Calu3 (cell line): ENCODE measurements at regions of chr4 and their contacts with region 1.

Region 1: GRCh38 chr4:3880615-3881120 is 114.5 kb downstream of the ADRA2C start:
- DNase-seq: peak; percentile 79
- H3K4me3 Mint-ChIP-seq: no peak overlapping the region
- H3K27ac Mint-ChIP-seq: no peak overlapping the region
- H3K4me1 Mint-ChIP-seq: no peaks in the 10 kb centered on the region
- H3K27me3 Mint-ChIP-seq: peaks cover 87% of the 10 kb centered on the region
- CTCF ChIP-seq: peak; percentile 65

Region 2: DNA sequence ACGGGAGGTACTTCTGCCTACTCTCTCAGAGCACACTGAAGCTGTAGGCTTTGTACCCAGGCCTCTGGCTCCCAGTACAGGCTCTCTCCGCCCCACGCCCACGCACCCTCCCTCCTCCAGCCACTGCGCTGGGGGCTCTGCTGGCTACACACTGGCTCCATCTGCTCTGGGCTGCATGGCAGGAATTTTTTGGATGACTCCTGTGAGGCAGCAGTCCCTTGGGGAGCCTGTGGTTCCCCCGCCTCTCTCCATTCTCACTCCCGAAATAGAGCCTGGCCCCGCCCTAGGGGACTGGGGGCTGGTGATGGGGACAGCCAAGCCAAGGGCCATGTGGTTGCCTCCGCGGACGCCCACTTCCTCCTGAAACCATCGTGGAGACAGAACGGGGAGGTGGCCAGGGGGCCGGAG is 172.6 kb before region 1 on chr4:
- CTCF ChIA-PET with region 1: no interaction called
- intact Hi-C with region 1: no loop called
- DNase-seq: no peak
- H3K4me3 Mint-ChIP-seq: no peak overlapping the region
- H3K27ac Mint-ChIP-seq: no peak overlapping the region
- H3K4me1 Mint-ChIP-seq: no peaks in the 10 kb centered on the region
- H3K27me3 Mint-ChIP-seq: peaks cover 60% of the 10 kb centered on the region
- CTCF ChIP-seq: no peak

Region 3: DNA sequence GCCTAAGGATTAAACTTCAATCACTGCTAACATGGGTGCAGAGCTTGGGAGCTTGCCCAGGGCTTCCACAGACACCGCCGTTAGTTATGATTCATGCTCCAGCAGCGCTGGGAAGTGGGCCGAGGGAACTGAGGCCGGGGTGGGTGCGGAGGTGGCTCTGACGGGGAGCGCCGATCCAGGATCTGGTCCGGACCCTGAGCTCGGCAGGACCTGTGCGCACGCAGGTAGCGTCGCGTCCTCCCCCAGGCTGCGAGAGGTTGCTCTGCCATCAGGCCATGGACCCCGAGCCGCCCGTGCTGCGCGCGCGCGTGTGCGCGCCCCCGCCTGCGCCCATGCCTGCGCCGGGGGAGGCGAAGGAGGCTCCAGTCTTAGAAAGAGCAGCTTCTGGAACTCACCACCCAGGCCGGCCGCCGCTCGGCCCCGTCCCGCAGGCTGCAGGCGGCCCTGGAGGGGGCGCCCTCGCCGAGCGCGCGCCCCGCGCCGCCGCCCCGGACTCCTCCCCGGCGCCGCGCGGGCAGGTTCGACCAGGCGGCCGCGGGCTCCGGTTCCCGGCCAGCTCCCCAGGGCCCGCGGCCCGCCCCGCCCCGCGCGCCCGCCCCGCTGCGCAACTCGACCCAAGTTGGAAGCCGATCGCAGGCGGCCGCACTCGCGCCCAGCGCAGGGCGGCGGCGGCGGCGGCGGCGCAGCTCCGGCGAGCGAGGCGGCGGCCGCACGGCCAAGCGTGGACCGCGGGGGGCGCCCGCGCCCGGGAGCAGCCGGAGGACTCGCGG is 115.2 kb before region 1 on chr4:
- CTCF ChIA-PET with region 1: interaction called, 11 read pairs
- intact Hi-C with region 1: no loop called
- DNase-seq: peak; percentile 57
- H3K4me3 Mint-ChIP-seq: no peak overlapping the region
- H3K27ac Mint-ChIP-seq: no peak overlapping the region
- H3K4me1 Mint-ChIP-seq: no peaks in the 10 kb centered on the region
- H3K27me3 Mint-ChIP-seq: peaks cover 25% of the 10 kb centered on the region
- CTCF ChIP-seq: peak; percentile 16

Region 4: GRCh38 chr4:3836756-3837601 is 43.7 kb before region 1 on chr4:
- CTCF ChIA-PET with region 1: no interaction called
- intact Hi-C with region 1: no loop called
- DNase-seq: peak; percentile 15
- H3K4me3 Mint-ChIP-seq: no peak overlapping the region
- H3K27ac Mint-ChIP-seq: no peak overlapping the region
- H3K4me1 Mint-ChIP-seq: no peaks in the 10 kb centered on the region
- H3K27me3 Mint-ChIP-seq: peaks cover 85% of the 10 kb centered on the region
- CTCF ChIP-seq: no peak